Naive thymus-derived CD4-positive, alpha-beta T cell (primary cell): ENCODE measurements at regions of chr22 and their contacts with region 1.

Region 1: DNA sequence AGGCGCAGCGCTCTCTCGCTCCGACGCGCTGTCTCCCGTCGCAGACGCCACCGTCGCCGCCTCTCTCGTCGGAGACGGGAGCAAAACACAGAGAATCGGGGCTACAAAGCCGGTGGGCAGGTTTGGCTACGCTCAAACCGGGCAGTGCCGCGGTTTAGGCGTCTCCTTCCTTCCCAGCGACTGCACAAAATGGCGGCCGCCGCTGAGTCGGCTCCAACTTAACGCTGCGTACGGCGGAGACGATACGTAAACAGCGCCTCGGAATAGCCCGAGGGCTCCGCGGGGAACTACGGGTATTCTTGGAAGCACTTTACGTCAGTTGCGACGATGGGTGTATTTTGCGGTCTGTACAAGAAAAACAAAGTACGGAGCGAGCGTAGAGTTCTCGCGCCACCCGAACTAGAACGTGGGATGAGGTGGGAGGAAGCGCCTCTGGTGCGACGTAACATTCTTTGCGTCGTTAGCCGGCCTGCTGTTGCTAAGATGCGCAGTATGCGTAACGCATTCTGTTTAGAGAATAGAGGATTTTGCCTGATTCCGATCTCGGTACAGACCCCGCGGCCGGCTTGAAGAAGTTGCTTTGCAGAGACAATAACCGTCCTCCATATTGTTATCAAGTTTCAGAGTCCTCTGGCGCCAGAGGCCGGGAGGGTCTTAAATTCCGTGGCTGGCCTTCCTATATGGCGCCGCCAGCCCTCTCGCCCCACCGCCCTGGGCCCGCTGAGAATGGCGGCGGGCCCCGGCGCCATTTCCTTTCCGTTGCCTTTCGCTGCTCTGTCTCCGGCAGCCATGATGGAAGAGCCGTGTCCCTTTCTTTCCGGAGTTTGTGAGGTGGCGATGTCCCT is at the start of gene DDX17:
- DNase-seq: peak; percentile 89 to 99 (median 96)
- ATAC-seq: peak; percentile 94
- H3K4me3 ChIP-seq: peak within 1 kb of the TSS; percentile 88
- H3K4me3 Mint-ChIP-seq: peak within 1 kb of the TSS; percentile 92 to 100 (median 99)
- H3K27ac ChIP-seq: peak within 1 kb of the TSS; percentile 100
- H3K27ac Mint-ChIP-seq: peak within 1 kb of the TSS; percentile 100
- H3K4me1 ChIP-seq: peaks cover 35 to 37% of the 10 kb centered on the region in 2 donors
- H3K4me1 Mint-ChIP-seq: peaks cover 39 to 57% (median 48%) of the 10 kb centered on the region in 7 donors
- H3K27me3 ChIP-seq: no peaks in the 10 kb centered on the region
- H3K27me3 Mint-ChIP-seq: peaks cover 0 to 4% (median 0%) of the 10 kb centered on the region in 5 donors
- total RNA-seq, gene DDX17: 478 to 1,097 (median 684) TPM

Region 2: GRCh38 chr22:38181453-38182247 is 324.7 kb before region 1 on chr22 and contains the start of gene PLA2G6:
- CTCF ChIA-PET with region 1: no interaction called
- POLR2A ChIA-PET with region 1: no interaction called
- intact Hi-C with region 1: loop called in 1 of 2 experiments (anchors 1 kb)
- DNase-seq: peak; percentile 86 to 99 (median 90)
- ATAC-seq: peak; percentile 96
- H3K4me3 ChIP-seq: peak within 1 kb of the TSS; percentile 90
- H3K4me3 Mint-ChIP-seq: peak within 1 kb of the TSS; percentile 88 to 100 (median 94)
- H3K27ac ChIP-seq: peak within 1 kb of the TSS; percentile 67
- H3K27ac Mint-ChIP-seq: peak within 1 kb of the TSS; percentile 36 to 94 (median 89)
- H3K4me1 ChIP-seq: peaks cover 16 to 30% of the 10 kb centered on the region in 2 donors
- H3K4me1 Mint-ChIP-seq: peaks cover 34 to 50% (median 42%) of the 10 kb centered on the region in 7 donors
- H3K27me3 ChIP-seq: no peaks in the 10 kb centered on the region
- H3K27me3 Mint-ChIP-seq: peaks cover 0 to 14% (median 0%) of the 10 kb centered on the region in 5 donors
- total RNA-seq, gene PLA2G6: 66.5 to 252 (median 105) TPM

Region 3: GRCh38 chr22:38317122-38317994 is 189.0 kb before region 1 on chr22 and contains the start of gene CSNK1E:
- CTCF ChIA-PET with region 1: no interaction called
- POLR2A ChIA-PET with region 1: no interaction called
- intact Hi-C with region 1: loop called (anchors 1 to 10 kb)
- DNase-seq: peak; percentile 67 to 85 (median 74)
- ATAC-seq: peak; percentile 79
- H3K4me3 ChIP-seq: peak within 1 kb of the TSS; percentile 62
- H3K4me3 Mint-ChIP-seq: peak within 1 kb of the TSS; percentile 84 to 92 (median 89)
- H3K27ac ChIP-seq: peak within 1 kb of the TSS; percentile 91
- H3K27ac Mint-ChIP-seq: peak within 1 kb of the TSS; percentile 94 to 97 (median 95)
- H3K4me1 ChIP-seq: peaks cover 28 to 39% of the 10 kb centered on the region in 2 donors
- H3K4me1 Mint-ChIP-seq: peaks cover 31 to 49% (median 42%) of the 10 kb centered on the region in 7 donors
- H3K27me3 ChIP-seq: no peaks in the 10 kb centered on the region
- H3K27me3 Mint-ChIP-seq: no peaks in the 10 kb centered on the region
- total RNA-seq, gene CSNK1E: 71.6 to 143 (median 91.9) TPM

Region 4: GRCh38 chr22:38485783-38486182 is 20.6 kb before region 1 on chr22:
- CTCF ChIA-PET with region 1: interaction called, 4 read pairs
- POLR2A ChIA-PET with region 1: interaction called, 23 read pairs
- intact Hi-C with region 1: loop called in 1 of 2 experiments (anchors 2 kb)
- DNase-seq: no peak
- ATAC-seq: peak; percentile 46
- H3K4me3 ChIP-seq: no peak overlapping the region
- H3K4me3 Mint-ChIP-seq: peak overlapping the region in 1 of 10 donors; percentile 12
- H3K27ac ChIP-seq: no peak overlapping the region
- H3K27ac Mint-ChIP-seq: peak overlapping the region in 7 of 9 donors; percentile 38 to 80 (median 59)
- H3K4me1 ChIP-seq: no peaks in the 10 kb centered on the region
- H3K4me1 Mint-ChIP-seq: peaks cover 18 to 72% (median 54%) of the 10 kb centered on the region in 7 donors
- H3K27me3 ChIP-seq: no peaks in the 10 kb centered on the region
- H3K27me3 Mint-ChIP-seq: no peaks in the 10 kb centered on the region

Region 5: DNA sequence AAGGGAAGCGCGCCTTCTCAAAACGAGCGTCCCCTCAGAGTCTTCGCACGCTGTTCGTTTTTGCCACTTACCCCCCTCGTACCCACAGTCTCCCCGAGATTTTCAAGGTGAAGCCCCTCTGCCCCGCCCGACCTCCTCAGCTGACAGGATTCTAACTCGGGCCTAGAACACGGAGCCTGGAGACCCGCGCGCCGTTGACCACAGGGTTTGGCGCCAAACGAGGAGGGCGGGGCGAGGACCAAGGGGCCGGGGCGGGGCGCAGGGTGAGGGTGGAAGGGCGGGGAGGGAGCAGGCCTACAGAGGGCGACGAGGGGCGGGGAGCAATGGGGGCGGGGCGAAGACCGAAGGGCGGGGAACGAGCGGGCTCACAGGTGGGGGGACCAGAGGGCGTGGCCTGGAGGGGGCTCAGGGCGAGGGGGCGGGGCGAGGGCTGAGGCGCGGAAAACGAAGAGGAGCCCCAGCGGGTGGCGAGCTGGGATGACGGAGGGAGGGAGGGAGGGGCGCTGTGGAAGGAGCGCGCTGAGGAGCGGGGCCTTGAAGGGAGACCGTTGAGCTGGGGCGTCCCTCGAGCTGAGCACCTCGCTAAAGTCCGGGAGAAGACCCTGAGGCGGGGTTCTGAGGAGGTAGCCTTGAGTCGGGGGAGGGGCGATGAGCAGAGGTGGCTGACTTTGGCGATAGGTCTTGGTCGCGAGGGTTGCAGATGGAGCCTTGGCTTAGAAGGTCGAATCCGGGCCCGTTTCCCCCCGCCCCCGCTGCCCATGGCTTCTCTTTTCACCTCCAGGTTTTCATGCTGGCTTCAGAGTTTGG is 63.8 kb after region 1 on chr22 and contains the start of gene DMC1:
- CTCF ChIA-PET with region 1: no interaction called
- POLR2A ChIA-PET with region 1: interaction called, 6 read pairs
- intact Hi-C with region 1: loop called (anchors 1 kb)
- DNase-seq: peak; percentile 77 to 96 (median 89)
- ATAC-seq: peak; percentile 99
- H3K4me3 ChIP-seq: peak within 1 kb of the TSS; percentile 88
- H3K4me3 Mint-ChIP-seq: peak within 1 kb of the TSS; percentile 89 to 94 (median 92)
- H3K27ac ChIP-seq: peak within 1 kb of the TSS; percentile 87
- H3K27ac Mint-ChIP-seq: peak within 1 kb of the TSS; percentile 75 to 94 (median 91)
- H3K4me1 ChIP-seq: peaks cover 7 to 8% of the 10 kb centered on the region in 2 donors
- H3K4me1 Mint-ChIP-seq: peaks cover 7 to 21% (median 17%) of the 10 kb centered on the region in 7 donors
- H3K27me3 ChIP-seq: no peaks in the 10 kb centered on the region
- H3K27me3 Mint-ChIP-seq: peaks cover 0 to 7% (median 0%) of the 10 kb centered on the region in 5 donors
- total RNA-seq, gene DMC1: 0.32 to 7.4 (median 0.65) TPM in 4 of 5 experiments, not detected in the other

Region 6: GRCh38 chr22:38696606-38697424 is 190.5 kb after region 1 on chr22:
- CTCF ChIA-PET with region 1: no interaction called
- POLR2A ChIA-PET with region 1: no interaction called
- intact Hi-C with region 1: loop called (anchors 1 to 5 kb)
- DNase-seq: peak in 1 of 9 donors; percentile 25
- ATAC-seq: no peak
- H3K4me3 ChIP-seq: no peak overlapping the region
- H3K4me3 Mint-ChIP-seq: peak overlapping the region; percentile 14 to 94 (median 70)
- H3K27ac ChIP-seq: peak overlapping the region; percentile 47
- H3K27ac Mint-ChIP-seq: peak overlapping the region; percentile 44 to 100 (median 84)
- H3K4me1 ChIP-seq: peaks cover 30 to 34% of the 10 kb centered on the region in 2 donors
- H3K4me1 Mint-ChIP-seq: peaks cover 47 to 81% (median 68%) of the 10 kb centered on the region in 7 donors
- H3K27me3 ChIP-seq: no peaks in the 10 kb centered on the region
- H3K27me3 Mint-ChIP-seq: no peaks in the 10 kb centered on the region

Region 7: DNA sequence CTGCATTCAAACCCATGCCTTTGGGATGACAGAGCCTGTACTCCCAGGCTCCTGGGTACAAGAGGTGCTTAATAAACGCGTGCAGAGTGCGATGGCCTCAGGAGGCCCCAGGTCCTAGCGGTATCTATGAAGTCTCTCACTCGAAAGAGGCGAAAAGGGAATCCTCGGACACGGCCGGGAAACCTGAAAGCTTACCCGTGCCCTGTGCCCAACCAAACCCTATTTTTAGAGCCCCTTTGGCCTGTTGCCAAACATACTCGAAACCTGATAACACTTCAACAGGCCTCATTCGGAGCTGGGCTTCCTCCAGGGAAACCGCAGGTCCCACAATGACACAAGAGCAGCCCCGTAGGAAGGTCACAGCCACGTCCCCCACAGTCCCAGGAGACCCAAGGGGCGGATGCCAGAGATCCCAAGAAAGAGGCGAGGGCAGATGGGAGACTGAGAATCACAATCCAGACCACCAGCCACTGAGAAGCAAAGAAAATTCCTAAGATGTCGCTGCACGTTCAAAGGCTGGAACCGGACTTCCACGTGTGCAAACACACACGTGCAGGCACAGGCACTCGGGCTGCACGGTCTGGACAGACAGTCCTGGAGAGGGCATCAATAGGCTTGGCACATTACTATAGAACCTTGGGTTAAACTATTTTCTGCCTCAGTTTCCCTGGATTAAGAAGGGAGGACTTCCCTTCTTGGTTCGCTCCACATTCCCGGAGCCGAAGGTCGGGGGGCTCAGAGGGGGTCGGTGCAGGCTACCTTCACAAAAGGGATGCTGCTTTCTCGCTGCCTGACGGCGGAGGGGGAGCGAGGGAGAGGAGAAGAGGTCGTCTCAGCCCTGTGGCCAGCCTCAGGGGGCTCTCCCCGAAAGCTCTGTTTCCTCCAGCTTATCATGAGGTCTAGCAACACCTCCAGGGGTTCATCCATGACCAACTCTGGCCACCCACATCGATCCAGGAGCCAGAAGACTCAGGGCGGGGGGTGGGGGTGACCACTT is 730.3 kb after region 1 on chr22:
- CTCF ChIA-PET with region 1: no interaction called
- POLR2A ChIA-PET with region 1: no interaction called
- intact Hi-C with region 1: loop called in 1 of 2 experiments (anchors 5 kb)
- DNase-seq: peak in 7 of 9 donors; percentile 27 to 55 (median 49)
- ATAC-seq: peak; percentile 52
- H3K4me3 ChIP-seq: peak overlapping the region; percentile 14
- H3K4me3 Mint-ChIP-seq: peak overlapping the region; percentile 67 to 84 (median 79)
- H3K27ac ChIP-seq: no peak overlapping the region
- H3K27ac Mint-ChIP-seq: peak overlapping the region in 6 of 9 donors; percentile 31 to 89 (median 65)
- H3K4me1 ChIP-seq: peaks cover 54 to 66% of the 10 kb centered on the region in 2 donors
- H3K4me1 Mint-ChIP-seq: peaks cover 43 to 75% (median 67%) of the 10 kb centered on the region in 7 donors
- H3K27me3 ChIP-seq: peaks cover 0 to 8% of the 10 kb centered on the region in 2 donors
- H3K27me3 Mint-ChIP-seq: peaks cover 0 to 80% (median 38%) of the 10 kb centered on the region in 5 donors